ENCODE measurements at regions of chr2 and their contacts with region 1.

Region 1: DNA sequence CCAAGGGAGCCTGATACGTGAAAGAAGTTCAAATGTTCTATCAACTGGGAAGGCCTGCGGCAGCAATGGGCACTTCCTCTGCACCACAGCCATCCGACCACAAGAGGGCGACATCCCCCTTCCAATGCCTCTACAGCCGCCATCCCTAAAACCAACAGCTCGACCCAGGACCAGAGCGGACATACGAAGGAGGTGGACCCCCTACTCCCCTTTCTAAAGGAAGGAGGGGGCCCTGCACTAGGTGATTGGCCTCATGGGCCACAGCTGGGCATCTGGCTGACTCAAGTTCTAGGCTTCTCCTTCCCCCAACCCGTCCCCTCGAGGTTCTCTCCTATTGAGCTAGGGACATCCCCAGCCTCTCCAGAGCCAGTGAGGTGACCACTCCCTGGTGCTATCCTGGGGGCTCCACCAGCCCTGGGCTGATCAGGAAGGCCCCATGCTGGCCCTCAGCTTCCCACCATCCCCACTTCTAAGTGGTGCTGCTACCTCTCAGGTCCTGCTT is 217.2 kb downstream of the TNS1 start:
- DNase-seq: no peak
- H3K4me3 ChIP-seq: no peak overlapping the region
- H3K27me3 ChIP-seq: no peaks in the 10 kb centered on the region
- CTCF ChIP-seq: peak; percentile 95

Region 2: DNA sequence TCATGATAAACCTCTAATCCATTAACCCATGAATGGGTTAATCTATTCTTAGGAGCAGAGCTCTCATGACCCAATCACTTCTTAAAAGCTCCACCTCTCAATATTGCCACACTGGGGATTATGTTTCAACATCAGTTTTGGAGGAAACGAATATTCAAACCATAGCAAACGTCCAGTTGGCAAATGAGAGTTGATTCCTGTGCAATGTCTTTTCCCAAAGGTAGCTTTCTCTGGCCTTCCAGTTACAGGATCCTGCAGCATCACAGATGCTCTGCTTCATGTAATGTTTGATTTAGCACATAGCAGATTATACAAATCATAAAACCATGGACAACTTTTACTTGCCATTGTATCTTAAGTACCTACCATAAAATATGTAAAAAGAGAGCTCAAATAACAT is 263.8 kb before region 1 on chr2:
- CTCF ChIA-PET with region 1: no interaction called
- POLR2A ChIA-PET with region 1: no interaction called
- DNase-seq: no peak
- H3K4me3 ChIP-seq: no peak overlapping the region
- H3K27me3 ChIP-seq: no peaks in the 10 kb centered on the region
- CTCF ChIP-seq: no peak

Region 3: DNA sequence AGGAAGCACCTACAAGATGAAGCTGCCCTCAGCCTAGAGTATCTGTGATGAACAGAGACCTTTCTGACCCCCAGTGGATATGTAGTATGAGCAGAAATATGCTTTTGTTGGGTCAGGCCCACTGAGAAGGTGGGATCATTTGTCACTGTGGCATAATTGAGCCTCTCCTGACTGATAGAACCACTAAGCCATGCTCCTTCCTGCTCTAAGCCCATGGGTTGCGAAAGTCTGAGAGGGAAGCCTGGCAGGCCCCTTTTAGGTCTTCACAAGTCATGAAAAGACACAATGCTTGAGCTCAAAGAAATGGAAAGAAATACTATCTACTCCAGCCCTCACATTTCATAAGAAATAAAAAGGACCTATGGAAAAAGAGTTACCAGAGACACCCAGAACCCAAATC is 89.5 kb after region 1 on chr2:
- CTCF ChIA-PET with region 1: interaction called, 27 read pairs
- POLR2A ChIA-PET with region 1: no interaction called
- DNase-seq: no peak
- H3K4me3 ChIP-seq: no peak overlapping the region
- H3K27me3 ChIP-seq: no peaks in the 10 kb centered on the region
- CTCF ChIP-seq: no peak

Region 4: GRCh38 chr2:217899231-217900009 is 113.8 kb after region 1 on chr2:
- CTCF ChIA-PET with region 1: interaction called, 264 read pairs
- POLR2A ChIA-PET with region 1: no interaction called
- DNase-seq: peak; percentile 50
- H3K4me3 ChIP-seq: no peak overlapping the region
- H3K27me3 ChIP-seq: no peaks in the 10 kb centered on the region
- CTCF ChIP-seq: peak; percentile 84

Region 5: GRCh38 chr2:217959723-217960122 is 174.1 kb after region 1 on chr2:
- CTCF ChIA-PET with region 1: no interaction called
- POLR2A ChIA-PET with region 1: no interaction called
- DNase-seq: no peak
- H3K4me3 ChIP-seq: no peak overlapping the region
- H3K27me3 ChIP-seq: no peaks in the 10 kb centered on the region
- CTCF ChIP-seq: no peak

Region 6: DNA sequence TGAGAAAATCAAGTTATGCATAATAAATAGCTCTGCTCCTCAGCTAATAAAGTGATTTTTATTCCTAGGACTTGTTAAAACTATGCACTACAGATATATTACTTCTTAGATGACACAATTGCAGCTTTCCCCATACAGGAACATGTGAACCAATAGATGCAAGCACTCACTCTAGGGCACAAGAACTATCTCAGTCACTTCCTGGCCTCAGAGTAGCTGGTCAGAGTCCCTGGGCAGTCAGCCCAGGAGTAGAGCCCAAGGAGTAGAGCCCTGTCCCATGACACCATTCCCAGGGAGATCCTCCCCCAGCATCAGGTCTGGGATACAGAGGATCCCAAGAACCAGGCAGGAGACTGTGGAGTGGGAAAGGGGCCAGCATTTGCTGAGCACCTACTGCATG is 214.5 kb after region 1 on chr2:
- CTCF ChIA-PET with region 1: interaction called, 36 read pairs
- POLR2A ChIA-PET with region 1: no interaction called
- DNase-seq: peak; percentile 47
- H3K4me3 ChIP-seq: no peak overlapping the region
- H3K27me3 ChIP-seq: no peaks in the 10 kb centered on the region
- CTCF ChIP-seq: no peak

Region 7: GRCh38 chr2:218046238-218046637 is 260.6 kb after region 1 on chr2:
- CTCF ChIA-PET with region 1: interaction called, 38 read pairs
- POLR2A ChIA-PET with region 1: no interaction called
- DNase-seq: no peak
- H3K4me3 ChIP-seq: no peak overlapping the region
- H3K27me3 ChIP-seq: peaks cover 18% of the 10 kb centered on the region
- CTCF ChIP-seq: no peak

Measured in BJ (cell line).